Panc1 (cell line): ENCODE measurements at regions of chr4 and their contacts with region 1.

Region 1: GRCh38 chr4:173370477-173371291 is at the start of gene SAP30:
- DNase-seq: peak; percentile 80
- ATAC-seq: peak; percentile 92
- H3K4me3 ChIP-seq: peak within 1 kb of the TSS; percentile 77 to 99
- H3K27ac ChIP-seq: peak within 1 kb of the TSS; percentile 93
- H3K4me1 ChIP-seq: no peaks in the 10 kb centered on the region
- H3K27me3 ChIP-seq: no peaks in the 10 kb centered on the region
- CTCF ChIP-seq: no peak
- total RNA-seq, gene SAP30: 23.4 TPM

Region 2: DNA sequence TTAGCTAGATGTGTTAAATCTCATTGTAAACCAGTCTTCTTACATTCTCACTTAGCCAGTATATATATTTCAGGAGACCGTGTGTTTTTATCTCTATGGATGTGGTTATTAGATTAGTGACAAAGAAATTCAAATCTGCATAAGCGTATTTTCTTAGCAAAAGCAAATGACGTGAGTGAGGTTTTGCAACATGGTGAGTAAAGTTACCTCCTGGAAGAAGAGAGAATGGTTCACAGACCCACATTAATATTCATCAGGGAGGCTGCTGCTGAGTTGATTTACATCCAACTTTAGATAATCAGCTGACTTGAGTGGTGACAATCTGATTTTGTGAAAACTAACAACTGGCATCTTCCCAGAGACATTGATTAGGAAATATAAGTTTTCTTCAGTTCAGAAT is 792.0 kb before region 1 on chr4:
- CTCF ChIA-PET with region 1: no interaction called
- POLR2A ChIA-PET with region 1: interaction called, 14 read pairs
- in situ Hi-C with region 1: no loop called
- intact Hi-C with region 1: no loop called
- DNase-seq: no peak
- ATAC-seq: no peak
- H3K4me3 ChIP-seq: no peak overlapping the region
- H3K27ac ChIP-seq: no peak overlapping the region
- H3K4me1 ChIP-seq: no peaks in the 10 kb centered on the region
- H3K27me3 ChIP-seq: no peaks in the 10 kb centered on the region
- CTCF ChIP-seq: no peak

Region 3: GRCh38 chr4:172938072-172938829 is 432.4 kb before region 1 on chr4:
- CTCF ChIA-PET with region 1: no interaction called
- POLR2A ChIA-PET with region 1: interaction called, 11 read pairs
- in situ Hi-C with region 1: no loop called
- intact Hi-C with region 1: no loop called
- DNase-seq: no peak
- ATAC-seq: no peak
- H3K4me3 ChIP-seq: no peak overlapping the region
- H3K27ac ChIP-seq: no peak overlapping the region
- H3K4me1 ChIP-seq: no peaks in the 10 kb centered on the region
- H3K27me3 ChIP-seq: no peaks in the 10 kb centered on the region
- CTCF ChIP-seq: no peak

Region 4: DNA sequence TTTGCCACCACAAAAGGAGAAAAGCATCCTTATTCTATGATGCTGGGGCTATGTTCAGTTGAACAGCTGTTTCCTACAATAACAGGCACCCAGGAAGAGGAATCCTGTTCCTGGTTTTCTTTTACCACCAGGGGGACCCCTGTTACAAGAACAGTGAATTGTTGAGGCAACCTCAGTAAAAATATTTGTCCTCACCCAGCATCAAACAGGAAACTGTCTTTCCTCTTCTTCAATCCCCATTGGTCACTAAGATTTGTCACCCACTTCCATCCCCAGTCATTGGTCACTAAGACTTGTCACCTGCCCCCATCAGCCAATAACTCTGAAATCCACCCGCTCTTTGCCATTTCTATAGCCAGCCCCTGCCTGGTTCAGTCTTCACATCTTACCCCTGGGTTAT is 345.6 kb before region 1 on chr4:
- CTCF ChIA-PET with region 1: no interaction called
- POLR2A ChIA-PET with region 1: no interaction called
- in situ Hi-C with region 1: no loop called
- intact Hi-C with region 1: no loop called
- DNase-seq: no peak
- ATAC-seq: peak; percentile 83
- H3K4me3 ChIP-seq: no peak overlapping the region
- H3K27ac ChIP-seq: peak overlapping the region; percentile 68; the same call in 1 of the 2 replicates
- H3K4me1 ChIP-seq: no peaks in the 10 kb centered on the region
- H3K27me3 ChIP-seq: no peaks in the 10 kb centered on the region
- CTCF ChIP-seq: peak; percentile 73

Region 5: GRCh38 chr4:173334085-173334772 is 36.5 kb before region 1 on chr4 and contains the start of gene HMGB2:
- CTCF ChIA-PET with region 1: interaction called, 4 read pairs
- POLR2A ChIA-PET with region 1: interaction called, 19 read pairs
- in situ Hi-C with region 1: no loop called
- intact Hi-C with region 1: loop called (anchors 5 kb)
- DNase-seq: peak; percentile 98
- ATAC-seq: peak; percentile 90
- H3K4me3 ChIP-seq: peak within 1 kb of the TSS; percentile 86 to 91
- H3K27ac ChIP-seq: peak within 1 kb of the TSS; percentile 97
- H3K4me1 ChIP-seq: peaks cover 11% of the 10 kb centered on the region; the same call in 1 of the 2 replicates
- H3K27me3 ChIP-seq: no peaks in the 10 kb centered on the region
- CTCF ChIP-seq: no peak
- total RNA-seq, gene HMGB2: 183 TPM

Region 6: GRCh38 chr4:173420324-173420752 is 49.7 kb after region 1 on chr4:
- CTCF ChIA-PET with region 1: no interaction called
- POLR2A ChIA-PET with region 1: no interaction called
- in situ Hi-C with region 1: no loop called
- intact Hi-C with region 1: loop called (anchors 5 kb)
- DNase-seq: peak; percentile 10
- ATAC-seq: no peak
- H3K4me3 ChIP-seq: no peak overlapping the region
- H3K27ac ChIP-seq: no peak overlapping the region
- H3K4me1 ChIP-seq: no peaks in the 10 kb centered on the region
- H3K27me3 ChIP-seq: no peaks in the 10 kb centered on the region
- CTCF ChIP-seq: peak; percentile 55; the same call in 1 of the 2 replicates

Region 7: GRCh38 chr4:173917255-173917960 is 546.7 kb after region 1 on chr4:
- CTCF ChIA-PET with region 1: no interaction called
- POLR2A ChIA-PET with region 1: no interaction called
- in situ Hi-C with region 1: no loop called
- intact Hi-C with region 1: no loop called
- DNase-seq: no peak
- ATAC-seq: no peak
- H3K4me3 ChIP-seq: no peak overlapping the region
- H3K27ac ChIP-seq: no peak overlapping the region
- H3K4me1 ChIP-seq: no peaks in the 10 kb centered on the region
- H3K27me3 ChIP-seq: no peaks in the 10 kb centered on the region
- CTCF ChIP-seq: no peak